ENCODE measurements at regions of chr19 and their contacts with region 1.

Region 1: DNA sequence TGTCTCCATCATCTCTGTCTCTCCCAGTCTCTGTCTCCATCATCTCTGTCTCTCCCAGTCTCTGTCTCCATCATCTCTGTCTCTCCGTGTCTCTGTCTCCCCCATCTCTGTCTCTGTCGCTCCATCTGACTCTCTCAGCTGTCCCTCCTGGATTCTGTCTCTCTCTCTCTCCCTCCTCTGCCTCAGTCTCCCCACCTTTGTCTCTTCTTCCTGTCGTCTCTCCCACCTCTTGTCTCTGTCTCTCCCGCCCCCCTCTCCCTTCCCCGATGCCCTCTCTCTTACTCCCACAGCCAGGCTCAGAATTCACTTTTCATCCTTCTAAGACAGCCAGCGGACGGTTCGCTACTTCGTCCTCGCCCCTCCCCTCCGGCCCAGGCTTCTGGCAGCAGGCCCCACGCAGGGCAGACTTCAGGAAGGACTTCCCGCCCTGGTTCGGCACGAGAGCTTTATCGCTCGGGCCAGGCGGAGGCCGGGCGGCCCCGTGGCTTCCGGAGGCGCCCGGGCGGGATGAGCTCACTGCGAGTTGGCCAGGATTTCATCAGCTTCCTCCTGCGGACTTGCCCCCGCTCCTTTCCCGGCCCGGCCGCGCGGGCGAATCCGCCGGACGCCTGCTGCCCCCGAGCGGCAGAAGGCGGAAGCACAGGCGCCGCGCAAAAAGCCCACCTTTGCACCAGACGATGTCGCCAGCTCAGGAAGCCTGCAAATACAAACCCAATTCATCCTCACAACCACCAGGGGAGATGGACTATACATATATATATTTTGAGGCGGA is 12.4 kb upstream of the CCDC9 start:
- DNase-seq: peak; percentile 94
- H3K4me3 Mint-ChIP-seq: peak overlapping the region; percentile 70
- H3K27ac Mint-ChIP-seq: peak overlapping the region; percentile 87
- H3K4me1 Mint-ChIP-seq: peaks cover 30% of the 10 kb centered on the region
- H3K27me3 Mint-ChIP-seq: peaks cover 7% of the 10 kb centered on the region

Region 2: GRCh38 chr19:47035127-47036096 is 208.6 kb before region 1 on chr19:
- CTCF ChIA-PET with region 1: interaction called, 11 read pairs
- POLR2A ChIA-PET with region 1: no interaction called
- DNase-seq: peak; percentile 95
- H3K4me3 Mint-ChIP-seq: peak overlapping the region; percentile 75
- H3K27ac Mint-ChIP-seq: peak overlapping the region; percentile 37
- H3K4me1 Mint-ChIP-seq: peaks cover 22% of the 10 kb centered on the region
- H3K27me3 Mint-ChIP-seq: peaks cover 18% of the 10 kb centered on the region

Region 3: DNA sequence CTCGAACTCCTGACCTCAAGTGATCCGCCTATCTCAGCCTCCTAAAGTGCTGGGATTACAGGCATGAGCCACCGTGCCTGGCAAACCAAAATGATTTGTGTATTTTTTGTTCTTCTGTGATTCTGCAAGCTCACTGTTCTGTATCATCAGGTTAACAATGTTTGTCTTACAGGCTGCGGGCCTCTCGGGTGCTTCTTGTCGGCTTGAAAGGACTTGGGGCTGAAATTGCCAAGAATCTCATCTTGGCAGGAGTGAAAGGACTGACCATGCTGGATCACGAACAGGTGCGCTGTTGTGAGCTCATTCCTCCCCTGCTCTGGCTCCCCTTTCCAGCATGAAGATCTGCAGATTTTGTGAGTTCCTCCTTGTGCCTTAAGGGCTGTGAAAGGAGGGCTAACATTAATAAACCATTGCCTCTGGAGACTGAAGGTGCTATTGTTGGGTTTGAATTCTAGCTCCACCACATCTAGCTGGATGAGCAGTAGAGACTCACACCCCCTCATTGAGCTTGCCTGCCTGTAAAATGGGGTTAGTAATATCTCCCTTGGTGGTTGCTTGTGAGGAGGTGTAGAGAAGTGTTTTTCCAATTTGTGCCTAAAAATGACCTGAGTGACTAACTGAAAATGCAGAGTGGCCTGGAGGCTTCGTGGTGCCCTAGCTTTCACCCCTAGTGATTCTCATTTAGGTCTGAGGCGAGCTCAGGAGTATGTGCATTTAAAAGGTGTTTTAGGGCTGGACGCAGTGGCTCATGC is 100.5 kb before region 1 on chr19:
- CTCF ChIA-PET with region 1: interaction called, 65 read pairs
- POLR2A ChIA-PET with region 1: interaction called, 4 read pairs
- DNase-seq: no peak
- H3K4me3 Mint-ChIP-seq: no peak overlapping the region
- H3K27ac Mint-ChIP-seq: peak overlapping the region; percentile 21
- H3K4me1 Mint-ChIP-seq: peaks cover 55% of the 10 kb centered on the region
- H3K27me3 Mint-ChIP-seq: no peaks in the 10 kb centered on the region

Region 4: GRCh38 chr19:47186446-47187334 is 57.3 kb before region 1 on chr19:
- CTCF ChIA-PET with region 1: interaction called, 38 read pairs
- POLR2A ChIA-PET with region 1: interaction called, 15 read pairs
- DNase-seq: peak; percentile 77
- H3K4me3 Mint-ChIP-seq: peak overlapping the region; percentile 28
- H3K27ac Mint-ChIP-seq: peak overlapping the region; percentile 90
- H3K4me1 Mint-ChIP-seq: peaks cover 79% of the 10 kb centered on the region
- H3K27me3 Mint-ChIP-seq: no peaks in the 10 kb centered on the region

Region 5: GRCh38 chr19:47225746-47226425 is 18.1 kb before region 1 on chr19:
- CTCF ChIA-PET with region 1: interaction called, 134 read pairs
- POLR2A ChIA-PET with region 1: interaction called, 110 read pairs
- DNase-seq: peak; percentile 88
- H3K4me3 Mint-ChIP-seq: peak overlapping the region; percentile 79
- H3K27ac Mint-ChIP-seq: peak overlapping the region; percentile 89
- H3K4me1 Mint-ChIP-seq: peaks cover 18% of the 10 kb centered on the region
- H3K27me3 Mint-ChIP-seq: no peaks in the 10 kb centered on the region

Region 6: GRCh38 chr19:47273313-47273977 is 29.5 kb after region 1 on chr19:
- CTCF ChIA-PET with region 1: interaction called, 10 read pairs
- POLR2A ChIA-PET with region 1: interaction called, 23 read pairs
- DNase-seq: peak; percentile 93
- H3K4me3 Mint-ChIP-seq: peak overlapping the region; percentile 98
- H3K27ac Mint-ChIP-seq: peak overlapping the region; percentile 99
- H3K4me1 Mint-ChIP-seq: peaks cover 21% of the 10 kb centered on the region
- H3K27me3 Mint-ChIP-seq: no peaks in the 10 kb centered on the region